Prostate gland (tissue), 2 donors: ENCODE measurements at regions of chr17 and their contacts with region 1.

Region 1: DNA sequence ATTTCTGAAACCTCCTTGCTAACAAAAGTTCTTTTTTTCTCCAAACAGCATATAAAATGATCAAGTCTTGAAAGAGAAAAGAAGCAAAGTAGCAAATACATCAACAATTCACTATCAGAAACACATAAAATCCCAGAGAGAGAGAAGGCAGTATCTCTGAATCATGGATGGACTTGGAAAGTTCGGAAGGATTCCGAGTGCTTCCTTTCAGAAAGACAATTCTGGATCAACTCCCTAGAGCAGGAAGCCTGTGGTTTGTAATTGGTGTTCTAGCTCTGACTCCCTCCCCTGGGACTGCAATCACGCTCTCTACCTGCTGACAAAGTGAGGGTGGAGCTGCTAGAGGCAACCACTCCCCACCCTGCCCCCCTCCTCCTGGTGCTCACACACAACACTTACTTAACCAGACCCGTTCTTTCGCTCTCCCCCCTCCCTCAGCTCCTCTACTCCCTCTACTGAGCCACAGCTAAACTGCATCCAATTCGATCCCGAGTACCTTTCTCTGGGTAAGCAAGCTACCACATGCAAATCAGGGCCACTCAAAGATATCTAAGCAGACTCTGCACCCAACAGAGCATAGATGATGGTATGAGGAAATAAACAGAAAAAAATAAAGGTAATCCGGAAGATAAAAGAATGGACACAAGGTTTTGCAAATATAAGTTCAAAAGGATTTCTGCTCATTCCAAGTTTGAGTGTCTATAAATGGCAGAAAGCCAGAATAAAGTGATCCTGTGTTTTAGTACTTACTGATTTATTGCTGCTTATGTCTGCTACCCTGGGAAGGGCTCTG is at the start of gene RNF43:
- DNase-seq: peak; percentile 99
- H3K4me3 ChIP-seq: peak within 1 kb of the TSS; percentile 37 to 40
- H3K27ac ChIP-seq: peak within 1 kb of the TSS; percentile 81 to 84
- H3K4me1 ChIP-seq: no peaks in the 10 kb centered on the region
- H3K27me3 ChIP-seq: no peaks in the 10 kb centered on the region
- CTCF ChIP-seq: peak; percentile 59 to 97 (median 88)
- POLR2A ChIP-seq: peak; percentile 95
- total RNA-seq, gene RNF43: 29.3 to 31.9 TPM

Region 2: DNA sequence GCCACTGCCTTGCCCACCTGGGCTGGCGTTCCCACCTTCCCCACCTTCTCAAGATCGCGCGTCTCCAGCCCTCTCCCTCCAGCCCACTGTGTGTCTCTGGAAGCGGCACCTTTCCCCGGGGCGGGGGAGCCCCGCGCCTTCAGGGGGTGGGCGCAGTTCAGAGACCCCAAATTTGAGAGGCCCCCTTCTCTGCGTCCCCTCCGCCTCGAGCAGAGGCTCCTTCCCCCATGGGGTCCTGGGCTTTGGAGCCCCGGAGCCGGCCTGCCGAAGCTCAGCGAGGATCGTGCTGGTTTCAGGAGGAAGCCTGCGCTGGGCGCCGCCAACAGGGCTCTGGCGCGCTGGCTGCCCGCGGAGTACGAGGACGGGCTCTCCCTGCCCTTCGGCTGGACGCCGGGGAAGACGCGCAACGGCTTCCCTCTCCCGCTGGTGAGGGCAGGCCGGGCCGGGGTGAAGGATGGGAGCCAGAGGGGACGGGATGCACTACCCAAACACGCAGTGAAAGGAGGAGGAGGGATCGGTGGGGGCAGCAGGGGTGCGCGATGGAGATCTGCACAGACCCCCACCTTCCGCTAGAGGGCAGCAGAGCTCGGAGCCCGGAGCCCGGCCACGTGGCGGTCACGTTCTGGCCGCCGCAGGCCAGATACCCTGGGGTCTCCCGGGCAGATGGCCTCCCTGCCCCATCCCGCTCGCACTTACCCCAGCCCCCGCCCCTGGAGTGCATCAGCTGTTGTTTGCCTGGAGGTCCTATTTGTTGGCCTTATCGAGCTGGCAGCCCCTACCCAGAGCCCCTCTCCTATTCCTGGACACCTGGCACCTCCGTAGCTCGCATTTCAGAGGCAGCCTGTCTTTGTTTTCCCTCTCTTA is 168.0 kb before region 1 on chr17:
- intact Hi-C with region 1: loop called (anchors 5 kb)
- DNase-seq: peak; percentile 50
- H3K4me3 ChIP-seq: peak overlapping the region; percentile 18 to 33
- H3K27ac ChIP-seq: no peak overlapping the region
- H3K4me1 ChIP-seq: no peaks in the 10 kb centered on the region
- H3K27me3 ChIP-seq: peaks cover 4% of the 10 kb centered on the region
- CTCF ChIP-seq: peak; percentile 79 to 88 (median 84)
- POLR2A ChIP-seq: no peak

Region 3: DNA sequence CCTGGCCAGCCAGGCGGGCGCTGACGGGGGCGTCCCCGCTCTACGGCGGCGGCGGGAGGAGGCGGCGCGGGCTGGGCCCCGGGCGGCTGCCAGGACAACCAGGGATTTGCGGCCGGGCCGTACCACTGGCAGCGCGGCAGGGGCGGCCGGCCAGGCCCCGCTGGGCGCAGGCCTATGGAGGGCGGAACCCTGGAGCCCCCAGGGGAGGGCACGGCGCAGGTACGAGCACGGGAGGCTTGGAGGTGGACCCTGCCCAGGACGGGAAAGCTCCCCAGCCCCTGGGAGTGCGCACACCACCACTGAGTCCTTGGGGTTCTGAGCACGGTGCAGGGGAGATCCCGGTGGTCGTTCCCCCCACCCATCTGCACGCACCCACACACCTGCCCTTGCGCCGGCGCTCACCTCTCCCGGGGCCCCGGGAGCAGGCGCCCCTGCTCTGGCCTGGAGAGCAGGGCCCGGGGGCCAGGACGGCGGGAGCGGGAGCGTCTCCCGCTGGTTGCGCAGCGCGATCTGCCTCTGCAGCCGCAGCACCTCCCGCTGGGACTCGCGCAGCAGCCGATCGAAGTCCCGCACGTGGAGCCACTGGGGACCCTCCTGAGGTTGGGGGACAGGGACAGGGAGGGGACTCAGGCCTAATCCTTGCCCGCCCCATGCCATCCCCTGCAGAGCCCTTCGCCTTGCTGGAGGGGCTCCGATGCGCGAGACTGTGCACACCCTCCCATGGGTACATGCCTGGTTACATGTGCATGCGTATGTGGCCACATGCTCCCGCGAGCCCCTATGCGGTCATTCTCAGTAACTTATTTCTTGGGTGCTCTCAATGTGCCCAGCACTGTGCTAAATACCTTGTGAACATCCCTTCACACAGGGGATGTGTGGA is 92.8 kb before region 1 on chr17:
- intact Hi-C with region 1: loop called (anchors 5 kb)
- DNase-seq: peak; percentile 35
- H3K4me3 ChIP-seq: peak overlapping the region; percentile 64
- H3K27ac ChIP-seq: peak overlapping the region; percentile 59 to 67
- H3K4me1 ChIP-seq: no peaks in the 10 kb centered on the region
- H3K27me3 ChIP-seq: no peaks in the 10 kb centered on the region
- CTCF ChIP-seq: no peak
- POLR2A ChIP-seq: no peak

Region 4: GRCh38 chr17:58352014-58352842 is 65.3 kb before region 1 on chr17 and contains the start of gene SUPT4H1:
- intact Hi-C with region 1: loop called (anchors 5 kb)
- DNase-seq: peak; percentile 91
- H3K4me3 ChIP-seq: peak within 1 kb of the TSS; percentile 44 to 75
- H3K27ac ChIP-seq: peak within 1 kb of the TSS; percentile 92 to 93
- H3K4me1 ChIP-seq: peaks cover 2% of the 10 kb centered on the region
- H3K27me3 ChIP-seq: no peaks in the 10 kb centered on the region
- CTCF ChIP-seq: peak; percentile 19 to 66 (median 37)
- POLR2A ChIP-seq: peak; percentile 81
- total RNA-seq, gene SUPT4H1: 44.8 to 70.0 TPM

Region 5: DNA sequence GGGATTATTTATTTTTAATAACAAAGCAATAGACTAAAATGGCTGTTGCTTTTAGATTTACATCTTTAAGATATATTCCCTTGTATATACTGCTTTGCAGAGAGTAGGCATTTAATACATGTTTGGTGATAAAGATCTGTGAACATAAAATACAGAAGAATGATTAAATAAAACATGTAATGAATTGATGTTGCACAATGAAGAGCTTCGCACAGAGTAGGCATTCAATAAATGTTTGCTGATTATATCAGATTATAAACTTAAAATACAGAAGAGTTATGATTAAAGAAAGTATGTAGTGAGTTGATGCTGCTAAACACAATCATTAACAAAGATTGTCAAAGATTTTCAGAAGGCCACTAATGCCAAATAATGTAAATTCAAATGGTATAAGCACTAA is 46.3 kb after region 1 on chr17:
- intact Hi-C with region 1: no loop called
- DNase-seq: no peak
- H3K4me3 ChIP-seq: no peak overlapping the region
- H3K27ac ChIP-seq: no peak overlapping the region
- H3K4me1 ChIP-seq: no peaks in the 10 kb centered on the region
- H3K27me3 ChIP-seq: no peaks in the 10 kb centered on the region
- CTCF ChIP-seq: no peak
- POLR2A ChIP-seq: no peak